ENCODE measurements at regions of chr4 and their contacts with region 1.

Region 1: GRCh38 chr4:8267077-8267476 is 2.5 kb upstream of the HTRA3 start:
- DNase-seq: peak; percentile 76 to 87
- ATAC-seq: peak; percentile 65
- H3K4me3 ChIP-seq: no peak overlapping the region
- H3K27ac ChIP-seq: no peak overlapping the region
- H3K4me1 ChIP-seq: no peaks in the 10 kb centered on the region
- H3K27me3 ChIP-seq: no peaks in the 10 kb centered on the region

Region 2: DNA sequence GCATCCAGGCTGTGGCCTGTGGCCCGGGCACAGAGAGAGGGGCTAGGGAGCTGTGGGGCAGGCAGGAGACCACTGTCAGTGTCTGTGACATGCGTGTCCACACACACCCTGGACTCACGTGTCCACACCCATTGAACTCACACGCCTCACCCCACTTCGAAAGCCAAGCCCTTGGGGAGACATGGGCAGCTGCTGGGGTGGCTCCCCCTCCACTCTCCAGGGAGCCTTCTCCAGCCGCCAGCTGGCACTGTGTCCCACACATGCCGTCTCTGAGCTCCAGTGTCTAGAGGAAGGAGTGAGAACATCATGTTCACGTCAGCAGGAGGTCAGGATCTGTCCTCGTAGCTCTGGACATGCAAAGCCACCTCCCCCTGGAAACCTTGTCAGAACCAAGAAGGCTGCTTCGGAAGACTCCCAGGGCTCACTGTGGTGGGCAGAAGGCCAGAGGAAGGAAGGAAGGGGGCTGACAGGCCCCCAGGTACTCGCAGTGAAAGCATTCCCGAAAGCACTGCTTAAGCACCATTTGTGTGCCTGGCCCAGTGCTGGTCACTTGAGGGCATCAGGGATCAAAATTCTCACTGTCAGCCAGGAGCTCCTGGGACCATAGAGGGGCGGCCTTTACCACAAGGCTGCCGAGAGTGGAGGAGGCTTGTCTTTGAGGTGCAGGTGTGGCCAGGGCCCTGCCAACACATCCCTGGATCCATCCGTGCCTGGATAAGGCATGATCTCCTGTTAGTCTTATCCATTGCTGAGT is 63.9 kb after region 1 on chr4:
- intact Hi-C with region 1: loop called in 1 of 2 experiments (anchors 10 kb)
- DNase-seq: peak; percentile 49 to 55
- ATAC-seq: peak; percentile 47
- H3K4me3 ChIP-seq: no peak overlapping the region
- H3K27ac ChIP-seq: no peak overlapping the region
- H3K4me1 ChIP-seq: no peaks in the 10 kb centered on the region
- H3K27me3 ChIP-seq: no peaks in the 10 kb centered on the region

Region 3: GRCh38 chr4:8391972-8392371 is 124.9 kb after region 1 on chr4:
- intact Hi-C with region 1: loop called in 1 of 2 experiments (anchors 5 kb)
- DNase-seq: no peak
- ATAC-seq: no peak
- H3K4me3 ChIP-seq: no peak overlapping the region
- H3K27ac ChIP-seq: no peak overlapping the region
- H3K4me1 ChIP-seq: no peaks in the 10 kb centered on the region
- H3K27me3 ChIP-seq: no peaks in the 10 kb centered on the region

Measured in aorta (tissue), 5 donors.